ENCODE measurements at regions of chr3 and their contacts with region 1.

Region 1: GRCh38 chr3:72646263-72646662 is 202.0 kb downstream of the SHQ1 start:
- DNase-seq: no peak
- ATAC-seq: no peak
- H3K4me3 Mint-ChIP-seq: no peak overlapping the region
- H3K27ac Mint-ChIP-seq: no peak overlapping the region
- H3K4me1 Mint-ChIP-seq: peaks cover 2% of the 10 kb centered on the region
- H3K27me3 Mint-ChIP-seq: peaks cover 2% of the 10 kb centered on the region

Region 2: DNA sequence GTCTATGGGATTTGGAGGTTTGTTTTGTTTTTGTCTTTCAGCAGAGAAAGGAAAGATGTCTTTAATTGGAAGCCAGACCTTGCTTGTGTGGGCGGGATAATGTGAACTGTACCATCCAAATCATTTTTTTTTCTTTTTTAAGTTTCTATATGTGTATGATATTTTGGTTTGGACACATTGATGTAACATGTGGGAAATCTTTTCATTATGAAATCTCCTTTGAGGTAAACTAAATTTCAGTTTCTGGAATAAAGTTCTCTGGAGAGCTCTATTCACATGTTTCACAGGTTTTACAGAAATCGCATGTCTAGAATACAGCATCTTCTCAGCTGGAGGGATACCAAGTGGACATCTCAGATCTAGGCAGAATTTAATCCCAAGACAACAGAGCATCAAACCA is 1882.4 kb before region 1 on chr3:
- CTCF ChIA-PET with region 1: no interaction called
- POLR2A ChIA-PET with region 1: no interaction called
- intact Hi-C with region 1: loop called in 1 of 2 experiments (anchors 5 kb)
- DNase-seq: peak; percentile 10
- ATAC-seq: no peak
- H3K4me3 Mint-ChIP-seq: no peak overlapping the region
- H3K27ac Mint-ChIP-seq: no peak overlapping the region
- H3K4me1 Mint-ChIP-seq: peaks cover 6% of the 10 kb centered on the region
- H3K27me3 Mint-ChIP-seq: peaks cover 18% of the 10 kb centered on the region

Region 3: DNA sequence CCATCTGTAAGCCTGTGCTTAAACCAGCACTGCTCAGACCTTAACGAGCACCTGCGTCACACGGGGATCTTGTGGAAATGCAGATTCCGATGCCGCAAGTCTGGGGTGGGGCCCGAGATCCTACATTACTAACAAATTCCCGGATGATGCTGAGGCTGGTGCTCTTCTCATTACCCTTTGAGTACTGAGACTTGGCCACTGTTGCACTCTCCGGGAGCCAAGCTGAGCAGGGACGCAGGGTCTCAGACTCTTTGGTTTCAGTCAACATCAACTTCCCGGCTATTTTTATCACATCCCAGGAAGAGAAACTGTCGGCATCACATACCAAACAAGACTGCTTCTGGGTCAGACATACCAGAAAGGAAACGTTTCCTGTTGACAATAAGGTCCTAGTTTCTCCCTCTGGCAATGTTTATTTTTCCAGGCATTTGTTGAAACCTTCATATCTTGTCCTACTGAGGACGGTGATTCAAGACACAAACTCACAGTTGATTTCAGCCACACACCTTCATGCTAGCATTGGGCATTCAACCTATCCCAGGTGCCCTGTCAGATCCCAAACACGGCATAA is 74.5 kb before region 1 on chr3:
- CTCF ChIA-PET with region 1: no interaction called
- POLR2A ChIA-PET with region 1: no interaction called
- intact Hi-C with region 1: no loop called
- DNase-seq: no peak
- ATAC-seq: no peak
- H3K4me3 Mint-ChIP-seq: no peak overlapping the region
- H3K27ac Mint-ChIP-seq: no peak overlapping the region
- H3K4me1 Mint-ChIP-seq: no peaks in the 10 kb centered on the region
- H3K27me3 Mint-ChIP-seq: no peaks in the 10 kb centered on the region

Region 4: DNA sequence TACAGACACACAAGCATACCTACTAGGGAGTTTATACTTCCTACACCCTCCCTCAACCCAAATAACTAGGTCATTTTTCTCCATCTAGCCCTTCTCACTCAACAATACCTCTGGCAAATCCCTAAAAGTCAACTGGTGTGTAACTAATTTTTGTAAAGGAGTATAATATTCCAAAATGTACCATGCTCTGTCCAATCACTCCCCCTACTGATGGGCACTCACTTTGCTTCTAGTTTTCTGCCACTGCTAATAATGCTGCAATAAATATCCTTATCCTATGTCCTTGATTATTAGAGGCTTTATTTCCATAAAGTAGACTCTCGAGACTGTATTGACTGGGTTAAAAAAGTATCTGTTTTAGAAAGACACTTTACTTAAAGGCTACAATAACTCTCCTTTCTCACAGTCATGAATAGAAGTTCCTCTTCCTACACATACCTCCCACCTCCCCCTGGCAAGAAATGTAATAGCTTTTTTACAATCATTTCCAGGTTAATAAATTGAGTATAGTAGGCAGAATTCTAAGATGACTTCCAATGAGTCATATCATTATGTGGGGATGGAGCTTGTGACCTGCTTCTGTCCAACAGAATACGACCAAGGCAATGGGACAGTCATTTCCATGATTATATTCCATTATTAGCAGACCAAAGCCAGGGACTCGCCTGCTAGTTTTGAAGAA is 172.0 kb after region 1 on chr3:
- CTCF ChIA-PET with region 1: no interaction called
- POLR2A ChIA-PET with region 1: no interaction called
- intact Hi-C with region 1: no loop called
- DNase-seq: no peak
- ATAC-seq: no peak
- H3K4me3 Mint-ChIP-seq: no peak overlapping the region
- H3K27ac Mint-ChIP-seq: peak overlapping the region; percentile 38
- H3K4me1 Mint-ChIP-seq: peaks cover 25% of the 10 kb centered on the region
- H3K27me3 Mint-ChIP-seq: no peaks in the 10 kb centered on the region

Region 5: GRCh38 chr3:72912532-72912931 is 266.3 kb after region 1 on chr3:
- CTCF ChIA-PET with region 1: no interaction called
- POLR2A ChIA-PET with region 1: no interaction called
- intact Hi-C with region 1: no loop called
- DNase-seq: no peak
- ATAC-seq: no peak
- H3K4me3 Mint-ChIP-seq: no peak overlapping the region
- H3K27ac Mint-ChIP-seq: no peak overlapping the region
- H3K4me1 Mint-ChIP-seq: no peaks in the 10 kb centered on the region
- H3K27me3 Mint-ChIP-seq: peaks cover 3% of the 10 kb centered on the region

Measured in activated CD4-positive, alpha-beta T cell treated with anti-CD3 and anti-CD28 coated beads for 36 hours (primary cell).